Aorta (tissue), 5 donors: ENCODE measurements at regions of chr10 and their contacts with region 1.

Region 1: GRCh38 chr10:10956681-10957542 is 60.8 kb upstream of the CELF2 start:
- DNase-seq: no peak
- ATAC-seq: no peak
- H3K4me3 ChIP-seq: no peak overlapping the region
- H3K27ac ChIP-seq: no peak overlapping the region
- H3K4me1 ChIP-seq: peaks cover 0 to 3% of the 10 kb centered on the region in 2 donors
- H3K27me3 ChIP-seq: no peaks in the 10 kb centered on the region

Region 2: GRCh38 chr10:10020945-10021344 is 936.0 kb before region 1 on chr10:
- intact Hi-C with region 1: no loop called
- DNase-seq: no peak
- ATAC-seq: no peak
- H3K4me3 ChIP-seq: no peak overlapping the region
- H3K27ac ChIP-seq: no peak overlapping the region
- H3K4me1 ChIP-seq: no peaks in the 10 kb centered on the region
- H3K27me3 ChIP-seq: no peaks in the 10 kb centered on the region

Region 3: DNA sequence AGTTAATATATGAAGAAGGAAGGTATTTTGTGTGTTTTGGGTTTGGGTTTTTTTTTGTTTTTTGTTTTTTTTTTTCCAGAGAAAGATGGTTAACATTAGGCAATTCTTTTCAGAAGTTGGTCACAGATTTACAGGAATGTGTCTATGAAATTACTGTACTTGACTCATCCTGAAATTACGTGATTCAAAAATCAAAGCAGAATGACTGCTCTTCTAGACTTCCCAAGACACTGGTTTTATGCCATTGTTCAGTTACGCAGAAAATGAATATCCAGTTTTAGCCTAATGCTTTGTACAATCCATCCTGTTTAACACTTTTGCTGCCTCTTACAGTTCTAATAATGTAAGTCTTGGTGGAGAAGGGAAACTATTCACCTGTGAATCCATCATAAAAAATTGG is 21.1 kb after region 1 on chr10:
- intact Hi-C with region 1: loop called in 1 of 2 experiments (anchors 2 kb)
- DNase-seq: no peak
- ATAC-seq: no peak
- H3K4me3 ChIP-seq: no peak overlapping the region
- H3K27ac ChIP-seq: no peak overlapping the region
- H3K4me1 ChIP-seq: no peaks in the 10 kb centered on the region
- H3K27me3 ChIP-seq: no peaks in the 10 kb centered on the region

Region 4: GRCh38 chr10:11073410-11073809 is 116.5 kb after region 1 on chr10:
- intact Hi-C with region 1: no loop called
- DNase-seq: no peak
- ATAC-seq: peak; percentile 36
- H3K4me3 ChIP-seq: no peak overlapping the region
- H3K27ac ChIP-seq: no peak overlapping the region
- H3K4me1 ChIP-seq: peaks cover 0 to 5% of the 10 kb centered on the region in 2 donors
- H3K27me3 ChIP-seq: no peaks in the 10 kb centered on the region